Endothelial cell of umbilical vein (primary cell): ENCODE measurements at regions of chr4 and their contacts with region 1.

Region 1: GRCh38 chr4:168631241-168632162 is 134.7 kb downstream of the PALLD start:
- DNase-seq: peak; percentile 72
- H3K4me3 ChIP-seq: peak overlapping the region; percentile 38 to 77 (median 51)
- H3K27ac ChIP-seq: peak overlapping the region; percentile 42
- H3K4me1 ChIP-seq: peaks cover 27% of the 10 kb centered on the region
- H3K27me3 ChIP-seq: no peaks in the 10 kb centered on the region
- CTCF ChIP-seq: peak; percentile 28 to 59
- POLR2A ChIP-seq: no peak

Region 2: DNA sequence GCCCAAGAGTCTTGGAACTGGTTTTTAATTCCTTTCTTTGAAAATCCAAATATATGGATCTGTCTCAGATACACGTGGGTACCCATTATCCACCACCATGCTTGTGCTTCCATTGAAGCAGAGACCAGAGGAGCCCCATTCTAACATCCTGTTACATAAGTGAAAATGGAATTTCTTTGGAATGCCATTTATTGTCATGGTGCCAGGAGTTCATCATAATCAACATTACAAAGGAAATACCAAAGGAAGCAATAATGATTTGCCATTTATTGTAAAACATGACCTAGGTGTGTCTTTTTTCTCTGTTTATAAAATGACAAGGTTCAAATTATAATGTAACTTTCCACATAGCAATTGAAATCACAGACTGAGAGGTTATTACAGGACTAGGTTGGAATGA is 72.9 kb before region 1 on chr4:
- CTCF ChIA-PET with region 1: no interaction called
- POLR2A ChIA-PET with region 1: no interaction called
- dilution Hi-C with region 1: no loop called
- intact Hi-C with region 1: loop called (anchors 2 kb)
- DNase-seq: peak; percentile 95
- H3K4me3 ChIP-seq: no peak overlapping the region
- H3K27ac ChIP-seq: peak overlapping the region; percentile 69
- H3K4me1 ChIP-seq: peaks cover 47% of the 10 kb centered on the region
- H3K27me3 ChIP-seq: no peaks in the 10 kb centered on the region
- CTCF ChIP-seq: no peak
- POLR2A ChIP-seq: no peak

Region 3: GRCh38 chr4:168569066-168569970 is 62.2 kb before region 1 on chr4:
- CTCF ChIA-PET with region 1: no interaction called
- POLR2A ChIA-PET with region 1: no interaction called
- dilution Hi-C with region 1: no loop called
- intact Hi-C with region 1: no loop called
- DNase-seq: peak; percentile 98
- H3K4me3 ChIP-seq: peak overlapping the region in 2 of 3 experiments; percentile 11 to 30
- H3K27ac ChIP-seq: peak overlapping the region; percentile 39
- H3K4me1 ChIP-seq: peaks cover 26% of the 10 kb centered on the region
- H3K27me3 ChIP-seq: no peaks in the 10 kb centered on the region
- CTCF ChIP-seq: no peak
- POLR2A ChIP-seq: no peak

Region 4: DNA sequence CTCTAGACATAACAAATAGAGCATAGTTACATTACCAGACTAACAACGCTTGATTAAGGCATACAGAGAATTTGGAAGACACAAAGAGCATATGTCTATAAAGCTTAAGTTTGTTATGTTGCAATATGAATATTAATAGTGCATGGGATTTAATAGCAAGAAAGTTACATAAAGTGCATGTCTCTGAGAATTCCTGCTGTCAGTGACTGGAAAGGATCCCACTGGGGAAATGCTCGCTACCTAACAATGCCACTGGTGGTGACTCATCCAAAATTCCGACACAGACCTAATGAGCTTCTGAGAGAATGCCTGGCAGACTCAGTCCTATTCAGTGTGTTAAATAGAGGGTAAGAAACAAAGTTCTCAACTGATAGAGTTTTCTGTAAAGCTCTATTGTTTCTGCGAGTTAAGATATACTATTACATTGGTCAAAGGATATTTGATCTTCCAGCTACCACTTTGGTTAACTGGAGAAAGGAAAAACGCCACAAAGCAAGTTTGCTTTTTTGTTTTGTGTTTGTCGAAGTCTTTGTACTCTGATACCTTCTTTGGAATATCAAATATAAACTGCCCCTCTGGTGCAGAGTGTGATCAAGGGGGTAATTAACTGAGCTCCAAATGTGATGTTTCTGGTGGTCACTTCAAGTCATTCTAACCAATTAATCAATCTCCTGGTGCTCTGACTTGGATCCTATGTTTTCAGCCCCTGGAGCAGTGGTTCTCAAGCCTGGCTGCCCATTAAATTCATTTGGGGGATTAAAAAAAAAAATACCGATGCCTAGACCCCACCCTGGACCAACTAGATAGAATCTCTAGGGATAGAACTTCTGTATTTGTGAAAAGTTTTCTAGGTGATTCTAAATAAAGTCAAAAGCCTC is 26.8 kb before region 1 on chr4:
- CTCF ChIA-PET with region 1: interaction called, 7 read pairs
- POLR2A ChIA-PET with region 1: interaction called, 4 read pairs
- dilution Hi-C with region 1: no loop called
- intact Hi-C with region 1: loop called (anchors 1 kb)
- DNase-seq: peak; percentile 96
- H3K4me3 ChIP-seq: no peak overlapping the region
- H3K27ac ChIP-seq: peak overlapping the region; percentile 64
- H3K4me1 ChIP-seq: peaks cover 25% of the 10 kb centered on the region
- H3K27me3 ChIP-seq: no peaks in the 10 kb centered on the region
- CTCF ChIP-seq: no peak
- POLR2A ChIP-seq: peak; percentile 22

Region 5: GRCh38 chr4:168612450-168613139 is 18.9 kb before region 1 on chr4:
- CTCF ChIA-PET with region 1: interaction called, 4 read pairs
- POLR2A ChIA-PET with region 1: no interaction called
- dilution Hi-C with region 1: no loop called
- intact Hi-C with region 1: loop called (anchors 1 kb)
- DNase-seq: peak; percentile 88
- H3K4me3 ChIP-seq: no peak overlapping the region
- H3K27ac ChIP-seq: peak overlapping the region; percentile 43
- H3K4me1 ChIP-seq: peaks cover 24% of the 10 kb centered on the region
- H3K27me3 ChIP-seq: no peaks in the 10 kb centered on the region
- CTCF ChIP-seq: no peak
- POLR2A ChIP-seq: no peak

Region 6: GRCh38 chr4:168643111-168643795 is 11.8 kb after region 1 on chr4:
- CTCF ChIA-PET with region 1: interaction called, 9 read pairs
- POLR2A ChIA-PET with region 1: interaction called, 3 read pairs
- dilution Hi-C with region 1: no loop called
- intact Hi-C with region 1: loop called (anchors 1 kb)
- DNase-seq: peak; percentile 66
- H3K4me3 ChIP-seq: no peak overlapping the region
- H3K27ac ChIP-seq: no peak overlapping the region
- H3K4me1 ChIP-seq: peaks cover 11% of the 10 kb centered on the region
- H3K27me3 ChIP-seq: no peaks in the 10 kb centered on the region
- CTCF ChIP-seq: no peak
- POLR2A ChIP-seq: no peak

Region 7: DNA sequence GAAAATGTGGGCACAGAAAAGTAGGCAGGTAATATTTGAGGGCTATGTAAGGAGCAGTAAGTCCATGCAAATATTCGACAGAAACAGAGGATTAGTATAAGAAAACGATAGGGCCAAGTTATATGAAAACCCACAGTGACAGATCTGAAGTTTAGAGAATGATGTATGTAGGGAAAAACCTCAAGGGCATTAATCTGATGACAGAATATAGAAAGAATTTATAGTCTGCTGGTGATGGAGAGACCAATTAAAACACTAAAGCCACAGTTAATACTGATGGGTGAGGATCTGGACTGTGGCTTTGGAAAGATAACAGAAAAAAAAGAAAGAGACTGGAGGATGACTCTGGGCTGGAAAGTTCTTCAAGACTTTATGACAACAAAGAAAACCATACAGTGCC is 35.0 kb after region 1 on chr4:
- CTCF ChIA-PET with region 1: no interaction called
- POLR2A ChIA-PET with region 1: no interaction called
- dilution Hi-C with region 1: no loop called
- intact Hi-C with region 1: loop called (anchors 2 kb)
- DNase-seq: no peak
- H3K4me3 ChIP-seq: no peak overlapping the region
- H3K27ac ChIP-seq: no peak overlapping the region
- H3K4me1 ChIP-seq: no peaks in the 10 kb centered on the region
- H3K27me3 ChIP-seq: no peaks in the 10 kb centered on the region
- CTCF ChIP-seq: no peak
- POLR2A ChIP-seq: no peak

Region 8: DNA sequence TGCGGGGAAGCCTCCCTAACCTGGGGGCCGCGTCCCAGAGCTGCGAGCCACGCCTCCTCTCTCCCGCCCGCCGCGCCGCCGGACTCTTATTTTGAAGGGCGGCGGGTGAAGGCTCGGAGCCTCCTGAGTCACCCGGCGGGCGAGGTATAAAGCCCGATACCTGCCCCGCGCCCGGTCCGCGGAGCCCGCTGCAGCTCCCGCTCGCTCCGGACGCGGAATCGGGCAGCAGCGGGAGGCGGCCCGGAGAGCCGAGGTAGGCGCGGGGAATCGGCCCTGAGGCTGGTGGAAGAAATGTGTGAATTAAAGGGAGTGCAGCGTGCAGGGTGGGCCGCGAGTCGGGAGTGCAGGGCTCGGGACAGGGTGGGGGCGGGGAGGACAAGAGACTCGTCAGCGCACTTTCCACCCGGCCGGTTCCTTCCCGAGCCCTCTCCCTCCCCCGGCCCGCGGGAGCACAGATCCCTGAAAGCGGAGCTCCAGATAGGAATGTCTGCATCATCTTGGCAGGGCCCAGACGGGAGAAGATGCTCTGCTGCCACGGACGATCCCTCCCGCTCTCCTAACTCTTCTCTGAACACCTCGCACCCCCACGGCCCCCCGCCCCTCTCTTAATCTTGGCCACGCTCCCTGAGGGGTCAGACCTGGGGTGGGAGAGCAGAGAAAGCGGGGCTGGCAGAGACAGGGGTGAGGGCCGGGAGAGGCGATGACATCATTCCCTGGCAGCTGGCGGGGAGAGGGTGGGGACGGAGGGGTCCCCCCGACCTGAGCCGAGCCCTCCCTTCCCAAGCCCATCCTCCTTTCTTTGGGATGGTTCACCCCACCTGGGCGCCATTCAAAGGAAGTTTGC is 200.6 kb after region 1 on chr4:
- CTCF ChIA-PET with region 1: no interaction called
- POLR2A ChIA-PET with region 1: interaction called, 3 read pairs
- dilution Hi-C with region 1: no loop called
- intact Hi-C with region 1: loop called (anchors 2 kb)
- DNase-seq: peak; percentile 78
- H3K4me3 ChIP-seq: peak overlapping the region; percentile 72 to 88 (median 81)
- H3K27ac ChIP-seq: peak overlapping the region; percentile 73
- H3K4me1 ChIP-seq: peaks cover 17% of the 10 kb centered on the region
- H3K27me3 ChIP-seq: no peaks in the 10 kb centered on the region
- CTCF ChIP-seq: no peak
- POLR2A ChIP-seq: peak; percentile 94